ENCODE measurements at regions of chr2 and their contacts with region 1.

Region 1: DNA sequence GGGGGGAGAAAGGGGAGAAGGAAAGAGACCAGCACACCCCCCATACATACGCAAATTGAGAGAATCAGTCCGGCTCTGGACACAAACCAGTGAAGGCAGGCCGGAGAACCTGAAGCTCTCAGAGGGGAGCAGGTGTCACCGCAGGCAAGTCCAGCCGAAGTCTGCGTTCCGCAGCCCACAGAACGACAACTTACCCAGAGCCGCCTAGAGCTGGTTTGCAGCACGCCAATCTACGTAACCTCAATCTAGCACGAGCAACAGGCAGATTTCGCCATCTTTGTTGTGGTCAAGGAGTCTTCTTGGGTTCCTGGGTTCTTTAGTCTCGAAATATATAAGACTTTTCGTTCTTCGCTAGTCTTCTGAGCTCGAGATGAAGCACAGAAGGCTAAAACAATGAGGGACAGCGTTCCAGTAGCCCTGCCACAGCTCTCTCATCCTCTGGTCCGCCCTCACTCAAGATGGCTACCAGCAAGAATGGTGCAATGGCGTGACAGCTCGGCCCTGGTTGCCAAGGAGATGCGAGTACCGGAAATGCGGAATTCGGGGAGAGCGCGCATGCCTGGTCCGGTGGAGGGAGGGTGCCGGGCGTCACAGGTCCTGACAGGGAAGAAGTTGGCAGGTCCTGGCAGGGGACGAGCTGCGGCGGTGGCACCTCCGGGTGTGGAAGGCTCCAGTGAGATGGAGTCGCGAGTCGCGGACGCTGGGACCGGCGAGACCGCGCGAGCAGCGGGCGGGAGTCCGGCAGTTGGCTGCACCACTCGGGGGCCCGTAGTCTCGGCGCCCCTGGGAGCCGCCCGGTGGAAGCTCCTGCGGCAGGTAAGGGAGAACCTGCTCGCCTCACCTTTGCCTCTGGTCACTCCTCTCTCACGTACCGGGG is at the starts of genes CAMKMT and PREPL:
- DNase-seq: peak; percentile 98 to 99 (median 99)
- H3K4me3 ChIP-seq: peak within 1 kb of the TSS; percentile 93 to 96
- H3K4me3 Mint-ChIP-seq: peak within 1 kb of the TSS; percentile 97 to 99 (median 98)
- H3K27ac ChIP-seq: peak within 1 kb of the TSS; percentile 98
- H3K27ac Mint-ChIP-seq: peak within 1 kb of the TSS; percentile 98 to 100 (median 100)
- H3K4me1 ChIP-seq: peaks cover 51% of the 10 kb centered on the region
- H3K4me1 Mint-ChIP-seq: peaks cover 28 to 70% (median 45%) of the 10 kb centered on the region in 4 donors
- H3K27me3 ChIP-seq: no peaks in the 10 kb centered on the region
- H3K27me3 Mint-ChIP-seq: no peaks in the 10 kb centered on the region
- total RNA-seq, gene CAMKMT: 15.3 to 16.2 TPM
- total RNA-seq, gene PREPL: 39.5 to 42.8 TPM

Region 2: DNA sequence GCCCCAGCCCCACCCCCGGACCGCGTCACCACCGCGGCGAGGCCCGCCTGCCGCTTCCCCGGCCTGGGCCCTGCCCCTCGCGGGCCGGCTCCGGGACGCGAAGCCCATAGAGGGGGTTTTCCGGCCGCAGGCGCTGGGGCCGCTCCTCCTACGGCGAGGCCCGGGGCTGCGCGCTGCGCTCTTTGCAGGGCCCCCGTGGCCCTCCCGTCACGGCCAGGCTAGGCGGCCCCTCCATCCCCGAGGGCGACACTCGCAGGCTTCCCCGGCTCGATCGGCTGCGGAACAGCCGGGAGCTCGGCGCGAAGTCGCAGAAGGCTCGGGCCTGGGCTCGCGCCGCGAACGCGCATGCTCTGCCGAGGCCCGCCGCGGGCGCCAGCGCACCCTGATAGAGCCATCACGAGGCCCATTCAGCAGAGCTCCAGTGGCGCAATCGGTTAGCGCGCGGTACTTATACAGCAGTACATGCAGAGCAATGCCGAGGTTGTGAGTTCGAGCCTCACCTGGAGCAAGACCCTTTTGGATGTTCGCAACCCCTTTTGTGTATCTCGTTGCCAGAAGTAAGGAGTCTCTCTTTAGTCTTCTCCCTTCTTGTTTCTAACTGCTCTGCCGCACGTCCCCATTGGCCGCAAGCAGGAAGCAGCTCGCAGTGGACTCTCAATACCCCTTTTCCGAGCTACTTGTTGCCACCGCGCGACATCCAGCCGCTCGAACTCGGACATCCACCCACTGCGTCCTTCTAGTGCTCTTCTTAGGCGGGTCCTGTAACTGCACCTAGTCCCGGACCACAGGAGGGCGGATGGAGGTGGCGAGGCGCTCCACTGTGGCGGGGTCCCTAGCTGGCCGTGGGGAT is 1551.2 kb before region 1 on chr2:
- CTCF ChIA-PET with region 1: no interaction called
- POLR2A ChIA-PET with region 1: interaction called, 14 read pairs
- intact Hi-C with region 1: no loop called
- DNase-seq: peak; percentile 96 to 97 (median 97)
- H3K4me3 ChIP-seq: peak overlapping the region; percentile 90 to 98
- H3K4me3 Mint-ChIP-seq: peak overlapping the region; percentile 93 to 99 (median 97)
- H3K27ac ChIP-seq: peak overlapping the region; percentile 81
- H3K27ac Mint-ChIP-seq: peak overlapping the region; percentile 95 to 99 (median 99)
- H3K4me1 ChIP-seq: peaks cover 9% of the 10 kb centered on the region
- H3K4me1 Mint-ChIP-seq: peaks cover 9 to 33% (median 17%) of the 10 kb centered on the region in 4 donors
- H3K27me3 ChIP-seq: no peaks in the 10 kb centered on the region
- H3K27me3 Mint-ChIP-seq: peaks cover 0 to 2% of the 10 kb centered on the region in 2 donors

Region 3: DNA sequence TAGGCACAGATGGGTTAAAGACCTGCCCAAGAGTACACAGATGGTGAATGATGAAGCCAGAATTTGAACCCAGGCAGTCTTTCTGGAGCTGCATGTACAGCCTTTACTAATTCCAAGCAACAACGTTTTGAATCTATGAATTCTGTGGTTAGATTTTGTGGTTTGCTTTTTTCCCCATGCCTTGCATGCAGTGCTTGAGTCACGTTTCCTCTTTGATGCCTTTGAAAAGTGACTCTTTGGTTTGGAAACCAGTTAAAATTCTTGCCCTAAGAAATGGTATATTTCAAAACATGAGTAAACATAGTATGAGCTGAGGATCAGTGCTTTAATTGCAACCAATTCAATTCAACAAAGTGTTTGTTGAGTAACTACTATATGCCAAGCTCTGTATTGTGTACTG is 241.1 kb before region 1 on chr2:
- CTCF ChIA-PET with region 1: no interaction called
- POLR2A ChIA-PET with region 1: no interaction called
- intact Hi-C with region 1: loop called (anchors 1 kb)
- DNase-seq: peak; percentile 33 to 73 (median 46)
- H3K4me3 ChIP-seq: no peak overlapping the region
- H3K4me3 Mint-ChIP-seq: peak overlapping the region in 4 of 8 donors; percentile 43 to 74 (median 56)
- H3K27ac ChIP-seq: no peak overlapping the region
- H3K27ac Mint-ChIP-seq: peak overlapping the region in 2 of 7 donors; percentile 44 to 66
- H3K4me1 ChIP-seq: peaks cover 12% of the 10 kb centered on the region
- H3K4me1 Mint-ChIP-seq: peaks cover 8 to 28% (median 16%) of the 10 kb centered on the region in 4 donors
- H3K27me3 ChIP-seq: no peaks in the 10 kb centered on the region
- H3K27me3 Mint-ChIP-seq: peaks cover 0 to 4% of the 10 kb centered on the region in 2 donors

Region 4: DNA sequence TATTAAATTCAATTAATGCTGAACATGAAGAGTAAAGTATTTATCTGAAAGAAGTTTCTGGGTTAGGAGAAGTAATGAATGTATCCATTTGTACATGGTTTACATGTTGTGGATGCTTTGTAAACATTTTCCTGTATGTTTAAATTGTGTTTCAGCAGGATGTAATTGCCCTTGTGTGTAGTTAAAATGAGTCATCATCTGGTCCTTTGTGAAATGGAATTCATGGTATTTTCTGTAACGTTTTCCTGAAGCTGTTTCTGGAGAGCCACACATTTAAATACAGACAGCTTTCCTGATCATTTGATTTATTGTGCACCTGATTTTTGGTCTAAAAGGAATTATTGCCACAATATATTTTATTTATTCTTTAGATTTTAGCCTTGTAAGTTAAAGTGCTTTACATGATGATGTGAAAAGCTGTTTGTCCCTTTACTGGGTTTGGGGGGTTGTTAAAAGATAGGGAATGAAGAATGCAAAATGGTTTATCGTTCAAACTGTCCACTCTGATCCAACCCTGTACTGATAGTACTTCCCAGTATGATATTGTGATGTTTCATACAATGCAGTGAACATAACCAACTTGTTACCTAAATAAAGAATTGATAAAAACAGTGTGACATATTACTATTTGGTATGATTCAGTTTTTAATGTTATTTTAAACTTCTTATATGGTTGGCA is 128.0 kb before region 1 on chr2:
- CTCF ChIA-PET with region 1: no interaction called
- POLR2A ChIA-PET with region 1: interaction called, 9 read pairs
- intact Hi-C with region 1: loop called (anchors 2 kb)
- DNase-seq: no peak
- H3K4me3 ChIP-seq: no peak overlapping the region
- H3K4me3 Mint-ChIP-seq: no peak overlapping the region
- H3K27ac ChIP-seq: no peak overlapping the region
- H3K27ac Mint-ChIP-seq: peak overlapping the region in 3 of 7 donors; percentile 7 to 64 (median 10)
- H3K4me1 ChIP-seq: peaks cover 19% of the 10 kb centered on the region
- H3K4me1 Mint-ChIP-seq: peaks cover 19 to 30% (median 22%) of the 10 kb centered on the region in 4 donors
- H3K27me3 ChIP-seq: no peaks in the 10 kb centered on the region
- H3K27me3 Mint-ChIP-seq: no peaks in the 10 kb centered on the region

Region 5: DNA sequence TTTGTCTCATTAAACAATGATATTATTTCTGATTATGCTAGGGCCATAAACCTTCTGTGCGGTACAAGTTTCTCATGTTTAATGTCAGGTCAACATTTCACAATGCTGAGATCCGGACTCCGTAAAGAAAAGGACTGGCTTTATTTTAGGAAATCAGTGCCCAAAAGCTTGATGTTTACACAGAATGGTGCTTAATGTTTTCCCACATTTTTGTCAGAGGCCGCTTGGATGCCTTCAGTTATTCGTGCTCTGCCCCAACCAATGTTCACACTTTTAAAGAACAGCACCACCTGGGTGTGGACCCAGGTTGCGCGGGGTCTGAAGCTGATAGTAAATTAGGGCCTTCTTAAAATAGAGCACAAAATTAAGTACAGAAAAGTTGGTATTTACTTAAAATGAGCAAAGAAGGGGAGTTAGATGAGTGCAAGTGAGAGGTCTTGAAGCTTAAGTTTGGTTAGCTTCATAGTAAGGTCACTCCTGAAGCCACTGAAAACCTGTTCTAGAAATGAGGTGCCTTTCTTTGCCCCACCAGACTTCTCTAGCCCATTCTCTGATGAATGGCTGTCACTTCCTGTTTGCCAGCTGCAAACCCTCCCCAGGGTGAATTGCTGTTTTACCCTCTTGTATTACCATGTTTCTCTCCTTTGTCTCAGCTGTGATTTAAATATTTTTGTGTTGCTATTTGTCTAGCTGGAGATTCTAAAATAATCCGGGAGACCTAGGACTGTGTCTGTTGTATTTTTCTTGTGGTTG is 65.8 kb before region 1 on chr2:
- CTCF ChIA-PET with region 1: no interaction called
- POLR2A ChIA-PET with region 1: no interaction called
- intact Hi-C with region 1: no loop called
- DNase-seq: peak in 2 of 5 donors; percentile 5 to 8
- H3K4me3 ChIP-seq: no peak overlapping the region
- H3K4me3 Mint-ChIP-seq: no peak overlapping the region
- H3K27ac ChIP-seq: no peak overlapping the region
- H3K27ac Mint-ChIP-seq: peak overlapping the region in 2 of 7 donors; percentile 32 to 59
- H3K4me1 ChIP-seq: peaks cover 12% of the 10 kb centered on the region
- H3K4me1 Mint-ChIP-seq: peaks cover 12 to 20% (median 16%) of the 10 kb centered on the region in 4 donors
- H3K27me3 ChIP-seq: no peaks in the 10 kb centered on the region
- H3K27me3 Mint-ChIP-seq: peaks cover 9 to 11% of the 10 kb centered on the region in 2 donors

Region 6: DNA sequence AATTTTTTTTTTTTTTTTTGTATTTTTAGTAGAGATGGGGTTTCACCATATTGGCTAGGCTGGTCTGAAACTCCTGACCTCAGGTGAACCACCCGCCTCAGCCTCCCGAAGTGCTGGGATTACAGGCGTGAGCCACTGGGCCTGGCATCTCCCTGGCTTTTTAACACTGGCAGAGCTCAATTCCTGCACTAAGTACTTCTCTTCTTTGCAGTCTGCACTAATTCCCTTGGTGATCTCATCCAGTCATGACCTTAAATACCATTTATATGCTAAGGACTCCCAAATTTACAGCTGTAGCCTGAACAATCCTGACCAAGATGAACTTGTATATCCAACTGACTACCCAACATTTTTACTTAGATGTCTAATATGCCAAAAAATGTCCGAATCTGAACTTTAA is 10.5 kb before region 1 on chr2:
- CTCF ChIA-PET with region 1: interaction called, 3 read pairs
- POLR2A ChIA-PET with region 1: interaction called, 18 read pairs
- intact Hi-C with region 1: no loop called
- DNase-seq: no peak
- H3K4me3 ChIP-seq: no peak overlapping the region
- H3K4me3 Mint-ChIP-seq: no peak overlapping the region
- H3K27ac ChIP-seq: no peak overlapping the region
- H3K27ac Mint-ChIP-seq: peak overlapping the region in 1 of 7 donors; percentile 3
- H3K4me1 ChIP-seq: no peaks in the 10 kb centered on the region
- H3K4me1 Mint-ChIP-seq: peaks cover 19 to 31% (median 23%) of the 10 kb centered on the region in 4 donors
- H3K27me3 ChIP-seq: no peaks in the 10 kb centered on the region
- H3K27me3 Mint-ChIP-seq: no peaks in the 10 kb centered on the region

Measured in CD4-positive, alpha-beta memory T cell (primary cell).